BJ (cell line): ENCODE measurements at regions of chr18 and their contacts with region 1.

Region 1: GRCh38 chr18:61581578-61582201 is 248.5 kb downstream of the CDH20 start:
- DNase-seq: no peak
- H3K4me3 ChIP-seq: peak overlapping the region; percentile 43
- H3K27me3 ChIP-seq: no peaks in the 10 kb centered on the region
- CTCF ChIP-seq: peak; percentile 99

Region 2: DNA sequence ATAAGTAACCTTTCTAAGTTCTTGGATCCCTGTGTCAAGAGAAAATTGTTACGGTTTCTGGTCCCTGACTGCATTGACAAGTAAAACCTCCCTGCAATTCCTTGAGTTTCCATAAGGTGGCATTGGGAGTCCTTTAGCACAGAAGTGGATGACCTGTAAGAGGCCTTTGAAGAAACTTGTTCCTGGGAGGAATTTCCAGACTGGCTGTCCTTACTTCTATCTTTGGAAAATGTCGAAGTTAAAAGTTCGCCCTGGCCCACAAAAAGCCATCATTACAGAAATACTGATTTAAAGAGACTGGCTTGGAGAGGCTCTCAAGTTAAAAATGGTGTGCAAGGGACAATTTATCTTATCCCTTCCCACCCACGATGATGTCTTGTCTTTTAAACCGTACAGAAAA is 30.1 kb before region 1 on chr18:
- CTCF ChIA-PET with region 1: interaction called, 11 read pairs
- POLR2A ChIA-PET with region 1: no interaction called
- DNase-seq: peak; percentile 52
- H3K4me3 ChIP-seq: no peak overlapping the region
- H3K27me3 ChIP-seq: no peaks in the 10 kb centered on the region; the same call in 1 of the 2 replicates
- CTCF ChIP-seq: peak; percentile 91

Region 3: GRCh38 chr18:61596296-61596695 is 14.6 kb after region 1 on chr18:
- CTCF ChIA-PET with region 1: interaction called, 13 read pairs
- POLR2A ChIA-PET with region 1: no interaction called
- DNase-seq: no peak
- H3K4me3 ChIP-seq: no peak overlapping the region
- H3K27me3 ChIP-seq: no peaks in the 10 kb centered on the region
- CTCF ChIP-seq: no peak

Region 4: DNA sequence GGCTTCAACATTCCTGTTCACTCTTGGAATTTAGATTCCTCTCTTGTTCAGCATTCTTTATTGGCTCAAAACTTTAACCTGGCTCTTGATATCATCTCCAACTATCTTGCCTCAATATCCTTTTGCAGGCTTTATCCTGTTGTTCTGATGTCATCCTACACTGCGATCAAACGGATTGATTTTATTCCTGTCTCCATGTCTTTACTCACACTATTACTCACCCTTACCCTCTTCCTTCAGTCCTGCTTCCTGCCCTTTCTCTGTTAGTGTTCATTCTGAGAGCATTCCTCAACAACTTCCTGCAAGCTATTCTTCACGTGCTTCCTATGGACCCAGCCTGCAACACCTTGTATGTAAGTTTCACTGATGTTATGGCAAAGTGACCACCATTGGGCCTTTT is 46.4 kb after region 1 on chr18:
- CTCF ChIA-PET with region 1: interaction called, 24 read pairs
- POLR2A ChIA-PET with region 1: interaction called, 3 read pairs
- DNase-seq: no peak
- H3K4me3 ChIP-seq: no peak overlapping the region
- H3K27me3 ChIP-seq: no peaks in the 10 kb centered on the region
- CTCF ChIP-seq: no peak

Region 5: DNA sequence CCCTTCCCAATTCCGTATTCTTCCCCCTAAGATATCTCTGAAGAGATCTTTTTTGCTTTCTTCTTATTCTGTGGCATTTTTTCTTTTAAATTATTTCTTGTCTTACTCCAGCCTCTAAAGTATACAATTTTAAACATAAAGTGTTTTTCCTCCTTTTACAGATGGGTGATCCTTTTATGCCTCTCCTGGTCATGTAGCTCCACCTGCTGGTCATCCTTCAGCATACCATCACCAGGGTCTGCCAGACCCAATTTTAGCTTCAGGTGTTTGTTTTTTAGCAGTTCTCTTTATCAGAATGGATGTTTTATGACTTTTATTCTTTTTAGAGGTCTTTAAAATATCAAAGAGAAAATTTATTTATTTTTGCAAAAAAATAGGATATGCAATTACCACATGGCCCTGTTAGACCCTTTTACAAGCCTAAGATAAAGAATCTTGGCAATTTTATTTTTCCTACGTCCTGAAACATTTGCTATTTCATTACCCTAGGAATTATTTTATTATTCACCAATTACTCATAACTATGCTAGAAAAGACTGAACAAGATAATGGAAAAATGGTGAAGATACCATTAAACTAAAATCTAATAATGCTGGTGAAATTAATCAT is 549.7 kb after region 1 on chr18:
- CTCF ChIA-PET with region 1: interaction called, 10 read pairs
- POLR2A ChIA-PET with region 1: no interaction called
- DNase-seq: peak; percentile 4
- H3K4me3 ChIP-seq: no peak overlapping the region
- H3K27me3 ChIP-seq: no peaks in the 10 kb centered on the region
- CTCF ChIP-seq: peak; percentile 90